Mucosa of descending colon (tissue), 3 donors: ENCODE measurements at regions of chr21 and their contacts with region 1.

Region 1: GRCh38 chr21:38355992-38356797 is 99.4 kb downstream of the KCNJ15 start:
- DNase-seq: peak; percentile 80 to 88 (median 87)
- ATAC-seq: peak; percentile 95
- H3K4me3 ChIP-seq: no peak overlapping the region
- H3K4me1 ChIP-seq: no peaks in the 10 kb centered on the region
- CTCF ChIP-seq: peak; percentile 85

Region 2: DNA sequence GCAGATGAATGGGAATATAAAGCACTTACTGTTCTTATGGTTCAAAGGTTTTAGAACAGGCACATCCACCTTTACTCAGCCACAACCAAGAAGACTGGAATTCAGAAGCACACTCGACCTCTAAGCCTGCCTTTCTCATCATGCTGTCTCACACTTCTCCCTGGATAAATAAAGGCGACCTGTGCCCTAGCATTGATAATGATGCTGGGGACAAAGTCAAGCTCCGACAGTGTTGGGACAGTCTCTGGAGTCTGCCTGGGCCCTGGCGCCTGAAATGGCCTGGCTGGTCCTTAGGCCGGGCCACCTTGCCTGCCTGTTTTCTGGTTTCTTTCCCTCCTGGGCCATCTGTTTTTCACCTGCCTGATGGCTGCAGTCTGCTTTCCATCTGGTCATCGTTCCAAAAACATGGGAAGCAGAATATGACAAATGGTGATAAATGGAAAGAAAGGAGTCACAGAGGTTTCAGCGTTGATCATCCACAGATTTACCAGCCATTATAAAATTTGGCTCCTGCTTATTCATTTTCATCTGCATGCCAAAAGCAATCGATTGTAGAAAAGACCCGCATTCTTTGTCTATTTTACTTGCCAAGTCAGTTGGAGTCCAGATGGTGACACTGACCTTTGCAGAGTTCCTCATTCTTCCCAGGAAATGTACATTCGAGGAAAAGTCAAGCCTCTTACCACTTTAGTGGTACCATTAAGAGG is 190.6 kb before region 1 on chr21:
- intact Hi-C with region 1: loop called in 1 of 2 experiments (anchors 10 kb)
- DNase-seq: no peak
- ATAC-seq: no peak
- H3K4me3 ChIP-seq: no peak overlapping the region
- H3K4me1 ChIP-seq: no peaks in the 10 kb centered on the region
- CTCF ChIP-seq: no peak

Region 3: GRCh38 chr21:38196036-38196435 is 160.2 kb before region 1 on chr21:
- intact Hi-C with region 1: no loop called
- DNase-seq: no peak
- ATAC-seq: no peak
- H3K4me3 ChIP-seq: no peak overlapping the region
- H3K4me1 ChIP-seq: no peaks in the 10 kb centered on the region
- CTCF ChIP-seq: no peak

Region 4: DNA sequence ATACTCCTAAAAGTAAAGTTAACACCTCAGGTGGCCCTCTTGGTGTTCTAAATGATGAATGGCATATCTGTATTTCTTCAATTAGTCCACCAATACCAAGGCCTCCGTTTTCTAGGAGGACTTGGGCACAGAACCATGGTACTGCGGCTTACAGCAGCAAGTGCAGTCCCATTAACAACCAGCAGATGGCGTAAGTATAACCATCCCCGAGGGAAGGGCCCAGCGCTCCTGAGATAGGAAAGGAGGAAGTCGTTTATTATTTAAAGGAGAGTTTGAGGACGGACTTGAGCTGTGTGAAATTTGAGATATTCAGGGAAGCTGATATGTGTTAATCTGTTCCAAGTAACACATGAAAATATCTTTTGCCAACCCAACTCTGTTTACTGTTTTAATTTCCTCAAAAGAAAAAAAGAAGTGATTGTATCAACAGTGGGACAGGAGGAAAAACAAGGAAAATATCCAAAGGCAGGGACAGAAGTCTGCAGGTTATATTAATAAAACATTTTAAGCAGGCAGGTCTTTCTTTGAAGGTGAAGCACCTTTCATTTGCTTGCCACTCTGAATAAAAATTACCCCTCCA is 137.1 kb before region 1 on chr21:
- intact Hi-C with region 1: loop called (anchors 5 kb)
- DNase-seq: peak; percentile 57 to 89 (median 65)
- ATAC-seq: peak; percentile 99
- H3K4me3 ChIP-seq: no peak overlapping the region
- H3K4me1 ChIP-seq: no peaks in the 10 kb centered on the region
- CTCF ChIP-seq: peak; percentile 92

Region 5: GRCh38 chr21:38531591-38531990 is 175.4 kb after region 1 on chr21:
- intact Hi-C with region 1: no loop called
- DNase-seq: no peak
- ATAC-seq: no peak
- H3K4me3 ChIP-seq: no peak overlapping the region
- H3K4me1 ChIP-seq: peaks cover 5% of the 10 kb centered on the region
- CTCF ChIP-seq: no peak